Activated CD4-positive, alpha-beta memory T cell treated with anti-CD3 and anti-CD28 coated beads for 36 hours (primary cell): ENCODE measurements at regions of chr17 and their contacts with region 1.

Region 1: DNA sequence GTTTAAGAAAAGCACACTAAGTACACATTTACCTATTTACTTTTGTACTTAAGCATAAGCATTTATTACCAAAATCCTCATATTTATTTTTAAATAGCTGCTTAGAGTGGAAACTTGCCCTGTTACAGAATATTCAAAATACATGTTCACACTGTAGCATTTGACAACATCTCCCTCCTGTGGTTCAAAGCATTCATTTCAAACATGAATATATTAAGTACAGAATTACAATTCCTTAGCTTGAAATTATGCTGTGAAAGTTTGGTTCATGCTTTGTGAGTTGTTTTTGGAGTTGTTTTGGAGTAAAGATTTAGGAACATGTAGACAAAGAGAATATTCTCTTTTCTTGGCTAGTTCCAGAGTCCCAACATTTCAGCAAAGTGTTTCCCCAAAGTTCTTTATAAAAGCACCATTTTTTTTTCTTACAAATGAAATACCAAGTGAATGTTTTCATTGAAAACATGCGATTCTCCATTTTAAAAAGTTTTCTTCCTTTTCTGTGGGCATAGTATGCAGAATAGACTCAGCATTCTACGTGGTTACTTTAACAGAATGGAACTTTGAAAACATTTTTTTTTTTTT is 33.2 kb downstream of the TUBD1 start:
- DNase-seq: no peak
- H3K4me3 Mint-ChIP-seq: no peak overlapping the region
- H3K27ac Mint-ChIP-seq: peak overlapping the region; percentile 50
- H3K4me1 Mint-ChIP-seq: peaks cover 15% of the 10 kb centered on the region
- H3K27me3 Mint-ChIP-seq: no peaks in the 10 kb centered on the region

Region 2: DNA sequence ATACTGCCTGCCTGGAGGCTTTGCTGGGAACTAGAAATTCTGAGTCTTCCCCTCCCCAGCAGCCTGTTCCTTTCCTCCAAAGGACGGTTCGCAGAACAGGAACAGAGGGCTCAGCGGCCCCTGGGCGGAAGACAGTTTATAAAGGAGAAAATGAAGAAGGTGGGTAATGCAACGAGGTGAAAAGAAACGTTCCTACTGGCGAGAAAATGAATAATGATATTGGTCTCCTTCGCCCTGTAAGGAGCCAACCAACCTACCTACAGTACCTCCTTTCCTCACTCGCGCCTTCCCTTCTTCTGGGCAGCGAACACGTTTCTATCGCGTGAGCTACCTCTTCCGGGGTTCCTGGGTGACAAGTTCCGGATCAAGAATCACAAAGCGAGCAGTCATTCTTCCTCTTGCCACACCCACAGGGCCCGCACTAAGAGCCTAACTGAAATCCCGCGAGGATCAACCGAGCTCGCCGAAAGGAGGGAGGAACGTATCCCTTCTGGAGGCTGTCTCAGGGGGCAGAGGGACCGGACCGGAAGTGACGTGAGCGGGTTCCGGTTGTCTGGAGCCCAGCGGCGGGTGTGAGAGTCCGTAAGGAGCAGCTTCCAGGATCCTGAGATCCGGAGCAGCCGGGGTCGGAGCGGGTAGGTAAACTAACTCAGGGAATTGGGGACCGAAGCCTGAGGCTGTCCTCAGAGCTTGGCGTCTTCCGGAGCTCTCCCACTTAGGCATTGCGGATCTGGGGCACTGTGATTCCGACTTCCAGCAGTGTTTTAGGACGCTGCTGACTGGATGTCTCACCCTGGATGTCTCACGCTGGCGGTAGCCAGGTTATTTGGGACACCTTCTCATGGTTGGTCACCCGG is 152.2 kb before region 1 on chr17 and contains the starts of genes PTRH2 and VMP1:
- CTCF ChIA-PET with region 1: interaction called, 12 read pairs
- POLR2A ChIA-PET with region 1: no interaction called
- intact Hi-C with region 1: no loop called
- DNase-seq: peak; percentile 97
- H3K4me3 Mint-ChIP-seq: peak within 1 kb of the TSS; percentile 96
- H3K27ac Mint-ChIP-seq: peak within 1 kb of the TSS; percentile 93
- H3K4me1 Mint-ChIP-seq: peaks cover 58% of the 10 kb centered on the region
- H3K27me3 Mint-ChIP-seq: no peaks in the 10 kb centered on the region
- total RNA-seq, gene PTRH2: 35.9 TPM
- total RNA-seq, gene VMP1: 517 to 553 TPM

Region 3: DNA sequence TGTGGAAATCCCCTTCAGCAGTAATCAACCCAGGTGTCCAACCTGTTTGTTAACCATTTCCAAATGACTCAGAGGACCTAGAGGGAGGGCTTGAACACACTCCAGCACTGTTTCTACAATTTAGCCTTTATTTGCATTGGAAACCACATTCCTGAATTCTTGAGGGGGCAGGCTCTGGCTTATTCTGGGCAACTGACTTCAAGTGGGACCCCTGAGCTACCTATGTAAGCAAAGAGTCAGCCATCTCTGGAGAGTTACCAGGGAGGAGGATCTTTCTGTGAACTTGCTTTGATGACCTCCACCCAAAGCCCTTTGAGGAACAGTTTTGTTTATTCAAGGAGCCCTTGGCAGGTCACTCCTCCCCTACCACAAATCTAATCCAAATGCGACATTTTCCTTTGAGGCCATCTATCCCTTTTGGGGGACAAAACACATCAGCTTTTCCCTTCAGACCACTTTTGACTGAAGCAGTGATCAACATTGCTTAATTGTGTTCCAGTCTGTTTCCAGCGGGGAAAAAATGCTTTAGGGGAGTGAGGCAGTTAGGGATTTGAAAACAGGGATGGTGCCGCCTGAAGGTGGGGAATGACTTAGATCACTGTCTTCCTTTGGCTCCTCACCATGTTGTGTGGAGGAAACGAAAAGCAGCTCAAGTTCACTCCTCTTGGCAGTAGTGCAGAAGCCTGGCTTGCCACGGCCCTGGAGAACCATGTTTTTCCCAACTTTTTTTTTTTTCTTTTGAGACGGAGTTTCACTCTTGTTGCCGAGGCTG is 13.0 kb before region 1 on chr17:
- CTCF ChIA-PET with region 1: interaction called, 4 read pairs
- POLR2A ChIA-PET with region 1: interaction called, 10 read pairs
- intact Hi-C with region 1: no loop called
- DNase-seq: peak; percentile 31
- H3K4me3 Mint-ChIP-seq: peak overlapping the region; percentile 60
- H3K27ac Mint-ChIP-seq: peak overlapping the region; percentile 100
- H3K4me1 Mint-ChIP-seq: peaks cover 68% of the 10 kb centered on the region
- H3K27me3 Mint-ChIP-seq: peaks cover 2% of the 10 kb centered on the region

Region 4: GRCh38 chr17:60804831-60805230 is 945.3 kb after region 1 on chr17:
- CTCF ChIA-PET with region 1: no interaction called
- POLR2A ChIA-PET with region 1: no interaction called
- intact Hi-C with region 1: no loop called
- DNase-seq: no peak
- H3K4me3 Mint-ChIP-seq: no peak overlapping the region
- H3K27ac Mint-ChIP-seq: no peak overlapping the region
- H3K4me1 Mint-ChIP-seq: no peaks in the 10 kb centered on the region
- H3K27me3 Mint-ChIP-seq: no peaks in the 10 kb centered on the region